HEK293 (cell line): ENCODE measurements at regions of chr9 and their contacts with region 1.

Region 1: DNA sequence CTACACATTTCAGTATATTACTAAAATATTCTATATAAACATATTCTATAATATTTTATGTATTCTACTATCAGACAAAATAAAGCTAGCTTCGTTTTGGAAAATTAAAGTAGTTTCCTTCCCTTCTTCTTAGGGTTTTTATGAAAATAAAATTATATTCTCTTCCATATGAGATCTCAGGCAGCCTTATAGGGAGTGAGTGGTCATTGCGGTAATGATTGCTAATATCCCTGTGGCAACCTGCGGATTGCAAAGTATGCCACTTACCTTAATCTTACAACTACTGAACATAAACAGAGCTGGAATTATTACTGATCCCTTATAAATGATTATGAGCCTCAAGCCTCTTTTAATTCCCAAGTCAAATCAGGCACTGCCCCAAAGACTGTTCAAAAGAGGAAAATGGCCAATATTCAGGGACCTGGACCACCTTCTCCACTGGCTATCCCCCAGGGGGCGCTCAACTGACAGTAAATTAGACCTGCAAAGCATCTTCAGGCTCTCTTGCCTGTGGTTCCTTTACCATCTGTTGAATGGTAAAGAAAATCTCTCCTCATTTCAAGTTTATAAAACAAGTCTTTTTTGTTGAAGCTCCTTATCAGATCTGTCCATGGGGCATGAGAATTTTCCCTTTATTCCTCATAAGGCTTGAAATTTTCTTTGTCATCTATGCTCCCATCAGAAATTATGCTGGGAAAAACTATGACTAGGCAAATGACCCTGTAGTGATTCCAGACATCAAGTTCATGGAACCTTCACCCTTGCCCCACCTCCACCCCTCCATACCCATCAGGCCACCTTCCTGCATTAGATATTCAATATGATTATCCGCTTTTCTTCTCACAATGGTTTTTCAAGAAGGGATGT is 163.9 kb downstream of the CEMIP2 start:
- H3K4me3 ChIP-seq: no peak overlapping the region
- H3K27ac ChIP-seq: no peak overlapping the region
- H3K4me1 ChIP-seq: no peaks in the 10 kb centered on the region
- CTCF ChIP-seq: no peak

Region 2: GRCh38 chr9:71285191-71285656 is 319.2 kb before region 1 on chr9:
- CTCF ChIA-PET with region 1: interaction called, 20 read pairs
- POLR2A ChIA-PET with region 1: no interaction called
- H3K4me3 ChIP-seq: no peak overlapping the region
- H3K27ac ChIP-seq: no peak overlapping the region
- H3K4me1 ChIP-seq: no peaks in the 10 kb centered on the region
- CTCF ChIP-seq: 0 out of 2 replicates have a peak, but pooled peaks have one; percentile 17

Region 3: GRCh38 chr9:71446473-71447411 is 157.7 kb before region 1 on chr9:
- CTCF ChIA-PET with region 1: no interaction called
- POLR2A ChIA-PET with region 1: no interaction called
- H3K4me3 ChIP-seq: peak overlapping the region; percentile 48
- H3K27ac ChIP-seq: no peak overlapping the region
- H3K4me1 ChIP-seq: no peaks in the 10 kb centered on the region
- CTCF ChIP-seq: peak; percentile 58; the same call in 1 of the 2 replicates

Region 4: GRCh38 chr9:71628247-71628646 is 23.8 kb after region 1 on chr9:
- CTCF ChIA-PET with region 1: interaction called, 13 read pairs
- POLR2A ChIA-PET with region 1: no interaction called
- H3K4me3 ChIP-seq: no peak overlapping the region
- H3K27ac ChIP-seq: no peak overlapping the region
- H3K4me1 ChIP-seq: no peaks in the 10 kb centered on the region
- CTCF ChIP-seq: no peak

Region 5: GRCh38 chr9:71716138-71716909 is 111.9 kb after region 1 on chr9:
- CTCF ChIA-PET with region 1: interaction called, 27 read pairs
- POLR2A ChIA-PET with region 1: no interaction called
- H3K4me3 ChIP-seq: no peak overlapping the region
- H3K27ac ChIP-seq: no peak overlapping the region
- H3K4me1 ChIP-seq: no peaks in the 10 kb centered on the region
- CTCF ChIP-seq: no peak

Region 6: GRCh38 chr9:71806901-71807307 is 202.5 kb after region 1 on chr9:
- CTCF ChIA-PET with region 1: interaction called, 19 read pairs
- POLR2A ChIA-PET with region 1: no interaction called
- H3K4me3 ChIP-seq: no peak overlapping the region
- H3K27ac ChIP-seq: no peak overlapping the region
- H3K4me1 ChIP-seq: no peaks in the 10 kb centered on the region
- CTCF ChIP-seq: peak; percentile 71; the same call in 1 of the 2 replicates

Region 7: DNA sequence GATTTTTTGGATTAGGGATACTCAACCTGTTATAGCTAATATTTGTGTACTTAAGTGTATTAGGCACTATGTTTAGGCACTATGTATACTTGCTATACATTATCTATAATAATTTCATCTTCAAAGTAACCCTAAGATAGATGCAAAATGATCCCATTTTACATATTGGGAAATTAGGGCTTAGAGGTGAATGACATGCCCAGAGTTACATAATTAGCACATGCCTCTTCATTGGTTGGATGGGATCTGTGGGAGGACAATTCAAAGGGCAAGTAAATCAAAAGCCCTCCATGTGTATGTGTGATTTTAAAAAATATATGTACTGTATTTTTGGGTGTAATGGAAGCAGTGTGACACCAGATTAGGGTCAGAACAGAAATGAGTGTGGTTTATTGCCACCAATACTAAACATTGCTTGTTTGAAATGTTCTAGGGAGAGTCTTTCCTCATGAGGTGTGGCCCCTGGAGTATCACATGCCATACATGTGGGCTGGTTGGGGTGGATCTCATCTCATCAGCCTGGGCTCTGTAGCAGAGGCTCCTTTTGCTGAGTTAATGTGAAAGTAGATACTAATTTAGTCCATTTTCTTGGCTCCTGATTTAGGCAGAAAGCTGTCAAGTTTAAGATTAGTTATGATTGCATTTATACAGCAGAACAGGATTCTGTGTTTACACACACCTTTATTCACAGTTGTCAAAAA is 312.6 kb after region 1 on chr9:
- CTCF ChIA-PET with region 1: no interaction called
- POLR2A ChIA-PET with region 1: no interaction called
- H3K4me3 ChIP-seq: no peak overlapping the region
- H3K27ac ChIP-seq: no peak overlapping the region
- H3K4me1 ChIP-seq: no peaks in the 10 kb centered on the region; the same call in 1 of the 2 replicates
- CTCF ChIP-seq: no peak